ENCODE measurements at regions of chr14 and their contacts with region 1.

Region 1: DNA sequence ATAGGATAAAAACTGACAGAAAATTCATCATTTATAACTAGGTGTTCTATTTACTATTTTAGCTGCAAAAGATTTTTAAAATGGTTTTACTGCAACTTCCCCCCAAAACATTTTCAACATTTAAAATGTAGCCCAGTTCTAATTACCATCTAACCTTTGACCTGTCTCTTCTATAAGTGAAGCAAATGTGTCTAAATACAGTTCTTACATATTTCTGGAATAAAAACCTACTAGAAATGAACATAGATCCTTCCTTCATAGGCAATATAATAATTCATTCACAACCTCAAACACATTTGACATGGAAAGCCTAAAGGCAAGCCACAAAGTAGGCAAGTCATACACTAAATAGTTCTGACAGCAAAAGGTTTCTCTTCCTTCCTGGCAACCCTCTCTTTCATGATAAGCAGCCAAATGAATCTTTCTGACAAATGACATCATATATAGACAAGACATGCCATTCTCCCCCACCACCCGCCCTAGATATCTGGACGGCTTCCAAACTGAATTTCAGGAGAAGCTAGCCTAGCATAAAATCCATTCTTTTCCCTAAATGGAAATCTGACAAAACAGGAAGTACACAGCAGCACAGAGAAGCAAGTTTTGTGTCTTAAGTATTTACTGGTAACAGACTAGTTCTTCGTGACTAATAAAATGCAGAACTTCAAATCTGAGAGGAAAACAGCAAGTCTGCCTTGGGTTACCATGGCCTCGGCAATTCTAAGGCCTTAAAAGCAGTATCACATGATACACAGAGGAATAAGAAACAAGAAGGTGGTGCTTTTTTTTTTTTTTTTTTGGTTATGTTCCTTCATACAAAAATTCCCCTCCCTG is 17.2 kb upstream of the ARID4A start:
- DNase-seq: peak; percentile 66
- H3K4me3 Mint-ChIP-seq: peak overlapping the region; percentile 70
- H3K27ac Mint-ChIP-seq: peak overlapping the region; percentile 99
- H3K4me1 Mint-ChIP-seq: peaks cover 68% of the 10 kb centered on the region
- H3K27me3 Mint-ChIP-seq: no peaks in the 10 kb centered on the region

Region 2: DNA sequence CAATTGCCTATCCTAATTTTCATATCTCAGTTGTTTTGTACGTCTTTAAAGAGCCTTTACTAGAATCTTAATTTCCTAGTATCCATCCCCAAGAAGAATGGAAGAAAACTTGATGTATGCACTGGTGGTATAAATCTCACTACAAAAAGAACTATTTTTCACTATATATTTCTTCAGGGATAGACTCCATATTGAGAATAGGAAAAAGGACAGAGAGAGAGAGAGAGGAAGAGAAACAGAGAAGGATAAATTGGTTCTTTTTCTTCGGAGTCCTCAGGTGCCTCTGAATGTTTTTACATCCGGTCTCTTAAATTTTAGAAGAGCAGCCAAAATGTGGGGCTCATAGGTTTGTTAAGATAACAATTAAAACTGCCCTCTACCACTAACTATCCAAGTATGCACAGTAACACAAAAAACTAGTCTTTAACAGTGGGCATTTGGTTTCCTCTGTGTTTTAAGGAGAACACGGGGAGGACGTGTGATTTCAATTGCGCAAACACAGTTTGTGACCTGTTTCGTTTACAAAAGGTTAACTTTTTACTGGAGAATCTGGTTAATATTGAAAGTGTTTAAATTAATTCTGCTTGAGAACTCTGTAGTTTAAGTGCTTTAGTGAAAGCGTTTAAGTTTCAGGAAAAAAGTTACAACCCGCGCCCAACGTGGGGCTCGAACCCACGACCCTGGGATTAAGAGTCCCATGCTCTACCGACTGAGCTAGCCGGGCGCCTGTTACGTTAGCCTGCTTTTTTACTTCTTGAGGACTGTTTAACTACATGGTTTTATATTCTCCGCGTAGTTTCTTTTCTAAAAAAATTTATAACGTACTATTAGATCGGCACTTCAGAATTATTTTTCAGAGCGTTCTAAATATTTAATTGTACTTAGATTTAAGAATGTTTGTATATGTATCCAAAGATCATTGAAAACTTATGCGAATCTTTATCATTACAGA is 41.7 kb before region 1 on chr14:
- CTCF ChIA-PET with region 1: no interaction called
- intact Hi-C with region 1: loop called (anchors 1 kb)
- DNase-seq: peak; percentile 88
- H3K4me3 Mint-ChIP-seq: no peak overlapping the region
- H3K27ac Mint-ChIP-seq: no peak overlapping the region
- H3K4me1 Mint-ChIP-seq: peaks cover 22% of the 10 kb centered on the region
- H3K27me3 Mint-ChIP-seq: no peaks in the 10 kb centered on the region

Region 3: GRCh38 chr14:58244556-58245387 is 36.4 kb before region 1 on chr14 and contains the start of gene PSMA3:
- CTCF ChIA-PET with region 1: no interaction called
- intact Hi-C with region 1: loop called (anchors 1 kb)
- DNase-seq: peak; percentile 99
- H3K4me3 Mint-ChIP-seq: peak within 1 kb of the TSS; percentile 98
- H3K27ac Mint-ChIP-seq: peak within 1 kb of the TSS; percentile 99
- H3K4me1 Mint-ChIP-seq: peaks cover 43% of the 10 kb centered on the region
- H3K27me3 Mint-ChIP-seq: no peaks in the 10 kb centered on the region
- total RNA-seq, gene PSMA3: 399 to 424 TPM

Region 4: DNA sequence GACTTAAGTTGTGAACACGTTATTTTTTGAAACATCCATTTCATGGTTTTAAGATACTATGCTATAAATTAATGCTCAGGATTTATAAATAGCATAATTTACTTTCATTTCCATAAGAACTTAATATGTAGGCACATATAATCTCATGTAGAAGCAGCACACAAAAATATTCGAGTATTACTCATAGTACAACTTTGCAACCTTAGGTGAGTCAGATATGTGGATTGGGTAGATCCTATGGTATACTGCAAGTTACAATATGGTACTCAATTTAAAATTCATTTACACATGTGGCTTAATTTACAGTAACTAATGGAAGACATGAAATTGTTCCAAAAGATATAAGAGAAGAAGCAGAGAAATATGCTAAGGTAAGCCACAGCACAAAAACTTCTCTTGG is 10.5 kb before region 1 on chr14:
- CTCF ChIA-PET with region 1: no interaction called
- intact Hi-C with region 1: loop called (anchors 1 kb)
- DNase-seq: no peak
- H3K4me3 Mint-ChIP-seq: no peak overlapping the region
- H3K27ac Mint-ChIP-seq: peak overlapping the region; percentile 70
- H3K4me1 Mint-ChIP-seq: peaks cover 39% of the 10 kb centered on the region
- H3K27me3 Mint-ChIP-seq: no peaks in the 10 kb centered on the region

Region 5: GRCh38 chr14:58331111-58331510 is 49.9 kb after region 1 on chr14:
- CTCF ChIA-PET with region 1: no interaction called
- intact Hi-C with region 1: loop called (anchors 2 kb)
- DNase-seq: peak; percentile 95
- H3K4me3 Mint-ChIP-seq: peak overlapping the region; percentile 73
- H3K27ac Mint-ChIP-seq: peak overlapping the region; percentile 83
- H3K4me1 Mint-ChIP-seq: peaks cover 20% of the 10 kb centered on the region
- H3K27me3 Mint-ChIP-seq: no peaks in the 10 kb centered on the region

Measured in activated naive CD4-positive, alpha-beta T cell treated with anti-CD3 and anti-CD28 coated beads for 36 hours (primary cell).